ENCODE measurements at regions of chr2 and their contacts with region 1.

Region 1: GRCh38 chr2:20106746-20107145 is 55.3 kb upstream of the LAPTM4A start:
- DNase-seq: peak in 1 of 2 donors; percentile 23
- H3K4me3 ChIP-seq: peak overlapping the region in 2 of 3 donors; percentile 40 to 60
- H3K27ac ChIP-seq: peak overlapping the region; percentile 10 to 12
- H3K4me1 ChIP-seq: no peaks in the 10 kb centered on the region
- H3K27me3 ChIP-seq: no peaks in the 10 kb centered on the region
- CTCF ChIP-seq: peak; percentile 19 to 66 (median 57)
- POLR2A ChIP-seq: no peak

Region 2: GRCh38 chr2:20164061-20164733 is 57.5 kb after region 1 on chr2:
- intact Hi-C with region 1: no loop called
- DNase-seq: no peak
- H3K4me3 ChIP-seq: no peak overlapping the region
- H3K27ac ChIP-seq: no peak overlapping the region
- H3K4me1 ChIP-seq: no peaks in the 10 kb centered on the region
- H3K27me3 ChIP-seq: no peaks in the 10 kb centered on the region
- CTCF ChIP-seq: no peak
- POLR2A ChIP-seq: no peak

Region 3: DNA sequence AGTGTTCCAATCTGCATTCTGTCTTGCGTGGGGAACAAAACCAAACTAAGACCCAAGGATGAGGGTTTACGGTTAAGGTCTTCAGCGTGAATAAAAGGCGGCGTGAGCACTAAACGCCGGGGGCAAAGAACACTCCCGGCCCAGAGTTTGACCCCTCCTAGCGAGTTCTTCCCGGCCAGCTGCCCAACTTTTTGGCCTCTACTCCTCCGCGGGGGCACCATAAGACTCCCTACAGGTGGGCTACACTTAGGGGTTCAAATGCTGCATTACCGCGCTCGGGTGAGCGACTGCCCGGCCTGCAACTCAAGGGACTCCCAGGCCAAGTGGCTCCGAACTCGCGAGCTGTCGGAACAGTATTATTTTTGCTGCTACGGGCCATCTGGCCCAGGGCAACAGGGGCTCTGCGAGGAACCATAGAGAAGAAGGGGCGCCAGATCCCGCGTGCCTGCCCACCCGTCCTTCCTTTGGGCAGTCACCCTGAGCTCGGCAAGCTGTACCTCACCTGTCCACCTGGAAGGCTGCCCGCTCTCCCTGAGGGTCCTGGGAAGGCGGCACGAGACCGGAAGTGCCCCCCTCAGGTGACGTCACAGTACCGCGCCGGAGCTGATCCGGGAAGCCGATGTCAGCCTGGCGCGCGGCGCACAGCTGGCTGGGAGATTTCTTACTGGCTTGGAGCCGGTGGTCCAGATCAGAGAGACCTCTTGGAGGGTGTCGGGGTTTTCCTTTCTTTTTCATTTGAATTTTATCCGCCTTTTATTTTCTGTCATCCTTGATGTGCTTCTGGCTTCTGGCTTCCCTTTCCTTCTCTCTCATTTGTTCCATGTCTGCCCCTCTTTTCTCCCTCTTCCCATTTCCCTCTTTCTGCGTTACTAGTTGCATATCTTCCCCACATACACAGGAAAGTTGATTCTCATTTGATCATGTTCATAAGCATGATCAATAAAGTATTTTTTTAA is 716.1 kb after region 1 on chr2 and contains the start of gene LDAH:
- intact Hi-C with region 1: loop called (anchors 5 kb)
- DNase-seq: peak; percentile 87 to 91
- H3K4me3 ChIP-seq: peak within 1 kb of the TSS; percentile 68 to 88 (median 84)
- H3K27ac ChIP-seq: peak within 1 kb of the TSS; percentile 89 to 94
- H3K4me1 ChIP-seq: no peaks in the 10 kb centered on the region
- H3K27me3 ChIP-seq: no peaks in the 10 kb centered on the region
- CTCF ChIP-seq: no peak
- POLR2A ChIP-seq: no peak
- total RNA-seq, gene LDAH: 12.3 to 17.0 (median 12.5) TPM